HEK293 (cell line): ENCODE measurements at regions of chr17 and their contacts with region 1.

Region 1: GRCh38 chr17:17303010-17303846 is at the start of gene NT5M:
- H3K4me3 ChIP-seq: peak within 1 kb of the TSS; percentile 50
- H3K27ac ChIP-seq: peak within 1 kb of the TSS; percentile 62; the same call in 1 of the 2 replicates
- H3K4me1 ChIP-seq: no peaks in the 10 kb centered on the region; the same call in 1 of the 2 replicates
- CTCF ChIP-seq: no peak

Region 2: DNA sequence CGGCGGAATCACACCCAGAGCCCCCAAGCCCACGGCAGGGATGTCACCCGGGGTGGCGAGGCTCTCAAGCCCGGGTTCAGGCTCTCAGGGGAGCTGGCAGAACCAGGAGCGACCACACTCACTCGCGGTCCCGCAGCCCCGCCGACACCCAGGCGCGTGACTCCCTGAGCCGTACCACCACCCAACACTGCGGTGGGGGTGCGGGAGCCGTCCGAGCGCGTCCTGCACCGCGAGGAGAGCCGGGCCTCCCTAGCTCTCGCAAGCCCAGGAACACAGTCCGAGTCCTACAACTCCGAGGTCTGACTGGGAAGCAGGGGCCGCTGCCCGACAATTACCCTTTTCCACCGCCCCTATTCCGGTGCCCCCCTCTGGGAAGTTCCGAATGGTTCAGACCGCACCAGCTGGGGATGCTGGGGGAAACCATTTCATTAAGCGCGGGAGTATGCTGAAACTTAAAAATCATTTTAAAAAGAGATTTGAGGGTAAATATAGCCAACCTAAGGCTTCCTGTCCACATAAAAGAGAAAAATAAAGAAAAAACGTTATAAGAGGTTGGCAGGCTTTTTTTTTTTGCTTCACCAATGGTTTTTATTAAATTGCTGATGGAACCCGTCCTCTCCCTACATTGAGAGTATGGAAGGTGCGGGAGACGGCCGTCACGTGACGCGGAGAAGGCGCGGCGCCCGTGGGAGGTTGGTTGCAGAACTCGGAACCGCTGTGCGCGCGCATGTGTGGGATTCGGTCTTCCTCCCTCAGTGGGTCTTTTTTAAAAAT is 66.0 kb before region 1 on chr17 and contains the start of gene FLCN:
- CTCF ChIA-PET with region 1: no interaction called
- POLR2A ChIA-PET with region 1: interaction called, 11 read pairs
- H3K4me3 ChIP-seq: peak within 1 kb of the TSS; percentile 100
- H3K27ac ChIP-seq: peak within 1 kb of the TSS; percentile 98
- H3K4me1 ChIP-seq: peaks cover 7% of the 10 kb centered on the region; the same call in 1 of the 2 replicates
- CTCF ChIP-seq: no peak

Region 3: GRCh38 chr17:17363638-17364337 is 60.6 kb after region 1 on chr17:
- CTCF ChIA-PET with region 1: no interaction called
- POLR2A ChIA-PET with region 1: no interaction called
- H3K4me3 ChIP-seq: no peak overlapping the region
- H3K27ac ChIP-seq: no peak overlapping the region
- H3K4me1 ChIP-seq: no peaks in the 10 kb centered on the region
- CTCF ChIP-seq: no peak